Heart left ventricle (tissue), 16 donors: ENCODE measurements at regions of chr5 and their contacts with region 1.

Region 1: GRCh38 chr5:115098041-115098702 is 71.5 kb downstream of the TRIM36 start:
- DNase-seq: no peak
- ATAC-seq: peak in 1 of 4 donors; percentile 61
- H3K4me3 ChIP-seq: no peak overlapping the region
- H3K27ac ChIP-seq: no peak overlapping the region
- H3K4me1 ChIP-seq: no peaks in the 10 kb centered on the region
- H3K27me3 ChIP-seq: peaks cover 0 to 4% (median 0%) of the 10 kb centered on the region in 9 donors
- CTCF ChIP-seq: peak; percentile 32 to 65 (median 52)
- POLR2A ChIP-seq: no peak

Region 2: GRCh38 chr5:114969490-114969889 is 128.7 kb before region 1 on chr5:
- intact Hi-C with region 1: no loop called
- DNase-seq: no peak
- ATAC-seq: no peak
- H3K4me3 ChIP-seq: no peak overlapping the region
- H3K27ac ChIP-seq: no peak overlapping the region
- H3K4me1 ChIP-seq: no peaks in the 10 kb centered on the region
- H3K27me3 ChIP-seq: no peaks in the 10 kb centered on the region
- CTCF ChIP-seq: no peak
- POLR2A ChIP-seq: no peak

Region 3: DNA sequence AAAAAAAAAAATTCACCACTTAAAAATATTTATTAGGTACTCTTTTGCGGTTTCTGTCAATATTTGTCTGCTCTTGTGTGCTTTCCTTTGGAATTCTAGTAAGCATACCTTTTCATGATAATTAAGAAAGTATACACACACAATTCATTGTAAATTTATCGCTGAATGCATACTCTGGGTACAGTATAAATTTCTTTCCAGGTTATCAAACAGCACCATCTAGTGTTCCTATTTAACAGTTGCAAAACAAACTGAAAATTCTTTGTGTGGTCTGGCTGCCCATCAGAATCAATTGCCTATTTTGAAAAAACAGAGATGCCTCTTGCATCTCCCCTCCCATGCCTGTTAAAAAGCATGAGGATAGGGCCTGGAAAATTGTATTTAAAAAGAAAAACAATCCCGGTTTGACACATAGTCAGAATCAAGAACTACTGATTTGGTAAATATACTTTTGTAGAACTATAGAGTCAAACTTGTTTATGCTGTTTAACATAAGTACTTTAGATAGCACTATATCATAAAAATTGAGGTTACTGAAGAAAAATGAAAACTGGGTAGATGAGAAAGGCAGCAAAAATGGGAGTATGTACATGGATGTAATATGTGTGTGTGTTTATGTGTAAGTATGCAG is 148.3 kb after region 1 on chr5:
- intact Hi-C with region 1: loop called (anchors 5 to 10 kb)
- DNase-seq: no peak
- ATAC-seq: peak in 1 of 4 donors; percentile 55
- H3K4me3 ChIP-seq: no peak overlapping the region
- H3K27ac ChIP-seq: no peak overlapping the region
- H3K4me1 ChIP-seq: peaks cover 0 to 27% (median 11%) of the 10 kb centered on the region in 12 donors
- H3K27me3 ChIP-seq: no peaks in the 10 kb centered on the region
- CTCF ChIP-seq: peak; percentile 59 to 80 (median 68)
- POLR2A ChIP-seq: no peak

Region 4: DNA sequence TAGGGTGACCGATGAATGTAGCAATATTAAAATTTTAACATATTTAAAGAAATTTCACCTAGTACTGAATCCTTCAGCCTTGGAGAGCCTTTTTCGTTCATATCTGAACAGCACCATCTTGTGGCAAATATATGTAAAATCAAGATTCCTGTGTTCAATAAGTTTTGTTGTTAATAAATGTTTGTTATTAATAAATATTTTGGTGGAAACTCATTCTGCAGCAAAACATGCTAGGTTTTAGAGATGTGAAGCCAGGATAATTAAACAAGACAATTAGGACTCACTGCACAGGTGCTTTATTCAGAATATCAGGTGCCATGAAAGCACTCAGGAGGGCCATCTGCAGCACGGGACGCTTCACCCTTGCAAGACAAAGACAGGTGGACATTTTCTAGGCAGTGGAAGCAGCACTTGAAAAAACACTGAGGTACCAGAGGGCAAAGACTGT is 488.5 kb after region 1 on chr5:
- intact Hi-C with region 1: loop called in 1 of 10 experiments (anchors 10 kb)
- DNase-seq: no peak
- ATAC-seq: no peak
- H3K4me3 ChIP-seq: no peak overlapping the region
- H3K27ac ChIP-seq: no peak overlapping the region
- H3K4me1 ChIP-seq: peaks cover 0 to 28% (median 5%) of the 10 kb centered on the region in 12 donors
- H3K27me3 ChIP-seq: no peaks in the 10 kb centered on the region
- CTCF ChIP-seq: peak; percentile 44 to 76 (median 62)
- POLR2A ChIP-seq: no peak